ENCODE measurements at regions of chr1 and their contacts with region 1.

Region 1: DNA sequence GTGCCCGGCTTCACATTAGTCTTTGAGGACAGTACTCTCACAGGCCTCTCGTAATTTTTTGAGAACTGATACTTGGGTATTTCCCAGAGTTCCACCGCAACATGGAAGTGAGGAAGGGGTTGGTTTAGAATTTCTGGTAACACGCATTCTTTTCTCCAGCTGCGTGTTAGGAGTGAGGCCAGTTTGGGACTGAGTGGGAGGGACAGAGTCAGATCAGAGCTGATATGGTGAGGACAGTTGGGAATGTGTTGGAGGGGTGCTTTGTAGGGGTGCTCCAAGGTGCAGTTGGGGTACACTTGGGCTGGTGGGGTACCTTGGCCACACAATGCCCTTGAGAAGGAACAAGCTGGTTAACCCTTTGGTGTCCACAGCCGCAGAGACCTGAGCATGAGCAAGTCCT is 6.7 kb downstream of the FBXO6 start:
- DNase-seq: no peak
- H3K4me3 ChIP-seq: no peak overlapping the region
- H3K4me3 Mint-ChIP-seq: no peak overlapping the region
- H3K27ac Mint-ChIP-seq: no peak overlapping the region
- H3K4me1 ChIP-seq: peaks cover 18% of the 10 kb centered on the region
- H3K4me1 Mint-ChIP-seq: no peaks in the 10 kb centered on the region
- H3K27me3 ChIP-seq: no peaks in the 10 kb centered on the region
- H3K27me3 Mint-ChIP-seq: no peaks in the 10 kb centered on the region
- CTCF ChIP-seq: no peak

Region 2: DNA sequence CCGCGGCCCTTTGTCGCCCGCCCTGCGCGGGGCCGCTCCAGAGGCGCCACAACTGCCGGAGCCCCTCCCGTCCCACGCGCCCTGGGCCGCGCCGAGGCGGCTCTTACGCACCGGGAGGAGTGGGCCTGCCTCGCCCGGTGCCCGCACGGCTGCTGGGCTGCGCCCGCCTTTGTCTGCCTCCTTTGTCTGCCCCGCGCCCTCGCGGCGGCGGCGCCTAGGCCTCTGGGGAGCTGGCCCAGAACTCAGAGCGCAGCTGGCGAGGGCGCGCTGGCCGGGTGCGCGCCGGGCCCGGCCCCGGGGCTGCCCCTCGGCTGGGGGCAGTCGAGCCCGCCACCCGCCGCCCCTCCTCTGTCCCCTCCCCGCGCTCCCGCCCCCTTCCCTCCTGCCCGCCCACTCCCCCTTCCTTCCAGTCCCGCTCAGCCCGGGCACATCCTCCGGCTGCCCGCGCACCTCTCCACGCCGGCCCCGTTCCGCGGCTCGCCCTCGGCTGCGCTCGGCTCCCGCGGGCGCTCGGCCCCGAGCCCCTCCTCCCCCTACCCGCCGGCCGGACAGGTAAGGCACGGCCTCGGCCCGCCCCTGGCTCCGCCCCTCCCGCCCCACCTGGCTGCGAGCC is 20.7 kb after region 1 on chr1 and contains the start of gene DRAXIN:
- CTCF ChIA-PET with region 1: interaction called, 3 read pairs
- POLR2A ChIA-PET with region 1: no interaction called
- intact Hi-C with region 1: loop called (anchors 2 kb)
- DNase-seq: peak in 1 of 2 experiments; percentile 27
- H3K4me3 ChIP-seq: peak within 1 kb of the TSS; percentile 42
- H3K4me3 Mint-ChIP-seq: peak within 1 kb of the TSS; percentile 80
- H3K27ac Mint-ChIP-seq: no peak within 1 kb of the TSS
- H3K4me1 ChIP-seq: peaks cover 8% of the 10 kb centered on the region; the same call in 1 of the 2 replicates
- H3K4me1 Mint-ChIP-seq: peaks cover 13% of the 10 kb centered on the region
- H3K27me3 ChIP-seq: no peaks in the 10 kb centered on the region; the same call in 1 of the 2 replicates
- H3K27me3 Mint-ChIP-seq: peaks cover 25% of the 10 kb centered on the region
- CTCF ChIP-seq: no peak
- total RNA-seq, gene DRAXIN: 0.05 TPM in 1 of 2 replicates, not detected in the other

Measured in Caco-2 (cell line).